ENCODE measurements at regions of chr1 and their contacts with region 1.

Region 1: GRCh38 chr1:168321945-168322344 is 41.3 kb downstream of the TBX19 start:
- DNase-seq: peak; percentile 57
- H3K4me3 ChIP-seq: no peak overlapping the region
- H3K27ac ChIP-seq: no peak overlapping the region
- H3K4me1 ChIP-seq: peaks cover 15% of the 10 kb centered on the region
- H3K27me3 ChIP-seq: no peaks in the 10 kb centered on the region
- CTCF ChIP-seq: peak; percentile 51 to 67

Region 2: DNA sequence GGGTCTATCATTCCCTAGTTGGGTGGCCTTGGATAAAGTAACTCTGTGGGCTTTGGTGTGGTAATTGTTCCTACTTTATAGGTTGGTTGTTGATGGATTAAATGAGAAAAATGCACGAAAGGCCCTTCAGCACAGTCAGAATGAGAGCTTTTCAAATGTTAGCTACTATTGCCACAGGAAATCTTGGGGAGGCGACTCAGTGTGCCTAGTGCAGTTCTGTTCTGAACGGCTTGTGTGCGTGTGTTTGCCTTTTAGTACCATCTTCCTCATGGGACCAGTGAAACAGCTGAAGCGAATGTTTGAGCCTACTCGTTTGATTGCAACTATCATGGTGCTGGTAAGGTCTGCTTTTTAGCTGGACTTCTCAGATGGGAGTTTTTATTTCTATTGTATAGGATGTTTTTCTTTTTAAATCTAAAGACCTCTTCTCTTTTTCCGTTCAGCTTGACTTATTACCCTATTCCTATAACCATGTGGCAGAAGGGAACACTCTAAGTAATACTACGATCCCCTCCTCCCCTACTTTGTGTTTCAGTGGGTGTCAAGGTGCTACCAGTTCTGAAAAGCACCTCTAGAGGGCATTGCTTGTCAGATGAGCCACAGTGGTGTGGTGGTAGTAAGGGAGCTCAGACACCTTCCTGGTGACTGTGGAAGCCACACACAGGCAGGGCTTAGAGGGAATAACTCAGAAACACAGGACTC is 86.9 kb before region 1 on chr1:
- CTCF ChIA-PET with region 1: interaction called, 45 read pairs
- dilution Hi-C with region 1: no loop called
- in situ Hi-C with region 1: loop called in 1 of 2 experiments (anchors 5 kb)
- intact Hi-C with region 1: loop called (anchors 1 kb)
- DNase-seq: peak; percentile 62
- H3K4me3 ChIP-seq: no peak overlapping the region
- H3K27ac ChIP-seq: no peak overlapping the region
- H3K4me1 ChIP-seq: peaks cover 2% of the 10 kb centered on the region
- H3K27me3 ChIP-seq: no peaks in the 10 kb centered on the region
- CTCF ChIP-seq: peak; percentile 83 to 89

Region 3: DNA sequence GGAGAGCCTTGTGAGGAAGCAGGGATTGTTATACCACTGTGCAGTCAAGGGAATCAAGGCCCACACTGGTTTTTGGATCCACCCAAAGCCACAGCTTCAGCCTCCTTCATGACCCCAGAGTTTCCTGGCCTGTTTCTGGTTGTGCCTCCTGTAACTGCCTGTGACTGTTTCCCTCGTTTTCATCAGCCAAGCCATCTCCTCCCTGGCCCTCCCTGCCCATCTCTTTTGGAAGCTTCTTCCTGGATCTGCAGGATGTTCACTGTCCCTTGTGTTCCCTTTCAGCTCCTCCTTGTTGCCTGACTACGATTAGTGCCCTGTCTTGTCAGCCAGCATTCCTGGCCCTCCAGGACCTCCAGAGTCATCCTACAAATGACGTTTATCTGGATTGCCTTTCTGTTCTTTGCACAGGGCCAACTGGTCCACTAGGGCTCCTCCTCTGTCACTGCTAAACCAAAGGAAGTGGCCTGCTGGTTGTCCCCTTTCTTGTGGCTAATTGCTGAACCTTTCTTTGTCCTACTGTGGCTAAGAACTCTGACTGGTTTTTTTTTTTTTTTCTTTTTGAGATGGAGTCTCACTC is 78.2 kb before region 1 on chr1:
- CTCF ChIA-PET with region 1: no interaction called
- dilution Hi-C with region 1: no loop called
- in situ Hi-C with region 1: loop called in 1 of 2 experiments (anchors 5 kb)
- intact Hi-C with region 1: no loop called
- DNase-seq: no peak
- H3K4me3 ChIP-seq: no peak overlapping the region
- H3K27ac ChIP-seq: no peak overlapping the region
- H3K4me1 ChIP-seq: no peaks in the 10 kb centered on the region
- H3K27me3 ChIP-seq: no peaks in the 10 kb centered on the region
- CTCF ChIP-seq: no peak

Region 4: DNA sequence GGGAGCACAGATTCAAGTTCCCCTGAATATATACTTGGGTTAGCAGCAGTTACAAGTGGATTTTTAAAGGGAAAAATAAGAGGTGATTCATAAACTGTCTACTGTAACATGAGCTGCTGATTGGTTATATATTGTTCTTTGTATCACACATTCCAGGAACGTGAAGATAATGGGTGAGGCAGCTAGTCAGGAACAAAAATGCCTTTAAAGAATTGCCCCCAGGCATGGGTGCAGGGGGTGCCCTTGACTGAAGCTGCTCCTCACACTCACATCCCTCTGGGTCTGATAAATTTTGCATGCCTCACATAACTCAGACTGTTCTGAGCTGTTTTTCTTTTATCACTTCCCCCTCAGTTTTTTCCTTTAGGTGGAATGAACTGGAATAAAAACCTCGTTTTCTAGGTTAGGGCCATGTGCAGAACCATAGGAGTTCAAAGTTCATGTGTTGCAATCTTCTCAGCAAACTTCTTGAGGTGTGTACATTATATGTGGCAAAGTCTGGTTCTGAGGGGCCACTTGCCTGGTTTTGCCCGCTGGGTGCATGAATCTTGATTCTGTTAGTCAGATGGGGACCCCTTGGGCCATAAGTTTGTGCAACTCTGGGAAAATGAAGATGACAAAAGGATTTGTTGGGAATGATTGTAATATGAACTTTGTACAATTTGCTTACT is 20.1 kb before region 1 on chr1:
- CTCF ChIA-PET with region 1: no interaction called
- dilution Hi-C with region 1: no loop called
- in situ Hi-C with region 1: no loop called
- intact Hi-C with region 1: loop called (anchors 1 kb)
- DNase-seq: peak; percentile 94
- H3K4me3 ChIP-seq: no peak overlapping the region
- H3K27ac ChIP-seq: peak overlapping the region; percentile 76
- H3K4me1 ChIP-seq: peaks cover 34% of the 10 kb centered on the region
- H3K27me3 ChIP-seq: no peaks in the 10 kb centered on the region
- CTCF ChIP-seq: no peak